Endothelial cell of umbilical vein (primary cell): ENCODE measurements at regions of chr5 and their contacts with region 1.

Region 1: DNA sequence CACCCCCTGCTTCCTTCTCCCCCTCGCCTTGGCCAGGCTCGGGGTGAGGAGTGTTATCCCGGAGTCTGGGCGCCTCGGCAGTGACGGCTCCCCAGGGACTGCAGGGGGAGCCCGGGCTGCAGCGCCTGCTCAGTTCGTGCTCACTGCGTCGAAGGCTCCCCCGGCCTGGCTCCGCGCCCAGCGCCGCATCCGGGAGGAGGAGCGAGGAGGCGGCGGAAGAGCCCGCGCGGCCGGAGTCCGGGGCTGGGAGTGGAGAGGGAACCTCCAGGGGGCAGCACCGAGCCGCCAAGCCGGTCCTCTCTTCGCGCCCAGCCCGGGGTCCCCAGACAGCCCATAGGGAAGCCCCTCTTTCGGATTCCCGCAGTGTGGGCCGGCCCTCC is 1.3 kb upstream of the EGR1 start:
- DNase-seq: peak; percentile 96
- H3K4me3 ChIP-seq: peak overlapping the region; percentile 62 to 84 (median 69)
- H3K27ac ChIP-seq: peak overlapping the region; percentile 90
- H3K4me1 ChIP-seq: peaks cover 16% of the 10 kb centered on the region
- H3K27me3 ChIP-seq: no peaks in the 10 kb centered on the region
- CTCF ChIP-seq: peak; percentile 85 to 96
- POLR2A ChIP-seq: peak; percentile 68

Region 2: GRCh38 chr5:138491669-138492559 is 27.9 kb after region 1 on chr5:
- CTCF ChIA-PET with region 1: interaction called, 18 read pairs
- POLR2A ChIA-PET with region 1: interaction called, 6 read pairs
- dilution Hi-C with region 1: no loop called
- intact Hi-C with region 1: loop called (anchors 1 kb)
- DNase-seq: peak; percentile 84
- H3K4me3 ChIP-seq: peak overlapping the region; percentile 24 to 53 (median 33)
- H3K27ac ChIP-seq: no peak overlapping the region
- H3K4me1 ChIP-seq: peaks cover 9% of the 10 kb centered on the region
- H3K27me3 ChIP-seq: peaks cover 11 to 22% of the 10 kb centered on the region in 2 experiments
- CTCF ChIP-seq: no peak
- POLR2A ChIP-seq: no peak

Region 3: GRCh38 chr5:138542956-138543729 is 79.1 kb after region 1 on chr5 and contains the start of gene ETF1:
- CTCF ChIA-PET with region 1: interaction called, 4 read pairs
- POLR2A ChIA-PET with region 1: interaction called, 3 read pairs
- dilution Hi-C with region 1: no loop called
- intact Hi-C with region 1: loop called (anchors 1 kb)
- DNase-seq: peak; percentile 100
- H3K4me3 ChIP-seq: peak within 1 kb of the TSS; percentile 79 to 95 (median 82)
- H3K27ac ChIP-seq: peak within 1 kb of the TSS; percentile 100
- H3K4me1 ChIP-seq: peaks cover 33% of the 10 kb centered on the region
- H3K27me3 ChIP-seq: no peaks in the 10 kb centered on the region
- CTCF ChIP-seq: no peak
- POLR2A ChIP-seq: no peak
- total RNA-seq, gene ETF1: 103 and 114 TPM in 2 replicates